Mammary epithelial cell (primary cell): ENCODE measurements at regions of chr1 and their contacts with region 1.

Region 1: GRCh38 chr1:160997323-160998038 is 23.5 kb downstream of the F11R start:
- DNase-seq: peak; percentile 64
- H3K4me3 ChIP-seq: no peak overlapping the region
- H3K27ac ChIP-seq: peak overlapping the region; percentile 9
- H3K4me1 ChIP-seq: peaks cover 32% of the 10 kb centered on the region
- H3K27me3 ChIP-seq: no peaks in the 10 kb centered on the region
- CTCF ChIP-seq: peak; percentile 59 to 71

Region 2: GRCh38 chr1:160681067-160681890 is 316.2 kb before region 1 on chr1:
- CTCF ChIA-PET with region 1: no interaction called
- dilution Hi-C with region 1: no loop called
- in situ Hi-C with region 1: no loop called
- intact Hi-C with region 1: loop called (anchors 2 kb)
- DNase-seq: peak; percentile 61
- H3K4me3 ChIP-seq: no peak overlapping the region
- H3K27ac ChIP-seq: no peak overlapping the region
- H3K4me1 ChIP-seq: no peaks in the 10 kb centered on the region
- H3K27me3 ChIP-seq: no peaks in the 10 kb centered on the region
- CTCF ChIP-seq: peak; percentile 79 to 91

Region 3: GRCh38 chr1:160911441-160911840 is 86.0 kb before region 1 on chr1:
- CTCF ChIA-PET with region 1: no interaction called
- dilution Hi-C with region 1: no loop called
- in situ Hi-C with region 1: no loop called
- intact Hi-C with region 1: no loop called
- DNase-seq: no peak
- H3K4me3 ChIP-seq: no peak overlapping the region
- H3K27ac ChIP-seq: no peak overlapping the region
- H3K4me1 ChIP-seq: no peaks in the 10 kb centered on the region
- H3K27me3 ChIP-seq: no peaks in the 10 kb centered on the region
- CTCF ChIP-seq: no peak

Region 4: DNA sequence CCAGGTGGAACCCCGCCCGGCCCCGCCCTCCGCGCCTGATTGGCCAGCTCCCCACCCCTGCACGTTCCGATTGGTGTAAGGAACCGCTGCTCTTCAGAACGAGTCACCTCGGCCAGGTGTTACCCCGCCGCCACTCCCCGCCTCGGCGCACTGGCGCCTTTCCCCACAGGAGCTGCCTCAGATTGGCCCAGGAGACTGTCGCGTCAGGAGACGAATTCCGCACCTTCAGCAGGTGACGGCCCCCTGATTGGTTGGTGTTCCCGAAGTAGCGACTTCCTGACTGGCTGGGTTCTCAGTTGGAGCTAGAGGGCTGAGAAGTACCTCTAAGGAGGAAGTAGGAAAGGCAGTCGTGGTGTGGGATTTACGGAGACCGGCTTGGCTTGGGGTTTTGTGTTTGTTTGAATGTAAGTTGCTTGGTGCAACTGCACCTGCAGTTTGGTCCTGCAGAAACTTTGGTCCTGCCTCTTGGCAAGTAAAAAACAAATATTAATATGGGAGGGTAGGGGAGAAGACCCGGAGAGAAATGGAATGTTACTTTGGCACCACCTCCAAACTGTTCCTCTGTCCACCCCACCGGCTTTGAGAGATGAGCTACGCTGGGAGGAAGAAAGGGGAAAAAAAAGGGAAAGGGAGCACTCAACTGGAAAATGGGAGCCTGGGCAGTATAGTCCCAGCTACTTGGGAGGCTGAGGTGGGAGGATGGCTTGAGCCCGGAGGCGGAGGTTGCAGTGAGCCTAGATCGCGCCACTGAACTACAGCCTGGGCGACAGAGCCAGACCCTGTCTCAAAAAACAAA is 23.9 kb after region 1 on chr1:
- CTCF ChIA-PET with region 1: interaction called, 10 read pairs
- dilution Hi-C with region 1: no loop called
- in situ Hi-C with region 1: no loop called
- intact Hi-C with region 1: loop called (anchors 1 kb)
- DNase-seq: peak; percentile 100
- H3K4me3 ChIP-seq: peak overlapping the region; percentile 74 to 81 (median 80)
- H3K27ac ChIP-seq: peak overlapping the region; percentile 98
- H3K4me1 ChIP-seq: peaks cover 34% of the 10 kb centered on the region
- H3K27me3 ChIP-seq: no peaks in the 10 kb centered on the region
- CTCF ChIP-seq: no peak

Region 5: GRCh38 chr1:161045750-161046571 is 48.5 kb after region 1 on chr1 and contains the start of gene USF1:
- CTCF ChIA-PET with region 1: no interaction called
- dilution Hi-C with region 1: loop called (anchors 5 kb)
- in situ Hi-C with region 1: no loop called
- intact Hi-C with region 1: loop called (anchors 2 kb)
- DNase-seq: peak; percentile 94
- H3K4me3 ChIP-seq: peak within 1 kb of the TSS; percentile 69 to 76 (median 70)
- H3K27ac ChIP-seq: peak within 1 kb of the TSS; percentile 81
- H3K4me1 ChIP-seq: peaks cover 8% of the 10 kb centered on the region
- H3K27me3 ChIP-seq: no peaks in the 10 kb centered on the region
- CTCF ChIP-seq: no peak
- total RNA-seq, gene USF1: 31.8 to 40.7 TPM

Region 6: DNA sequence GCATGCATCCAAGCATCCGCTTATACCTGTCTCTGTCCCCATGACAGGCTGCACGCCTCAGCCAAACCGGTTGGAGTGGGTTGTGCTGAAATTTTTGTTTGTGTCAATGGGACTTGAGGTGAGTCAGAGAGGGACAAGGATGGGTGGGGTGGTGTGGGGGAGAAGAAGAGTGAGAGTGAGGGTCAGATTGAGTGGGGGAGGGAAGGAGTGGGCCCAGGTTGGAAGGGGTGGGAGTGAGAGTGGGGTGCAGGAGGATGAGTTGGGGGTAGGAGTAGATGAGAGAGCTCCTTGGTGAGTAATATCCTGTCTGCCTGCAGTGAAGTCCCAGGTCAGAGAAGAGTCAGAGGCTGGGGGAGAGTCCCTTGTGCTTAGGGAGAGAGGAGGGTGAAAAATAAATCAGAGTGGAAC is 95.1 kb after region 1 on chr1:
- CTCF ChIA-PET with region 1: interaction called, 8 read pairs
- dilution Hi-C with region 1: loop called (anchors 5 kb)
- in situ Hi-C with region 1: no loop called
- intact Hi-C with region 1: loop called (anchors 1 kb)
- DNase-seq: peak; percentile 83
- H3K4me3 ChIP-seq: no peak overlapping the region
- H3K27ac ChIP-seq: peak overlapping the region; percentile 16
- H3K4me1 ChIP-seq: peaks cover 48% of the 10 kb centered on the region
- H3K27me3 ChIP-seq: no peaks in the 10 kb centered on the region
- CTCF ChIP-seq: no peak

Region 7: GRCh38 chr1:161132410-161133219 is 135.1 kb after region 1 on chr1 and contains the start of gene DEDD:
- CTCF ChIA-PET with region 1: no interaction called
- dilution Hi-C with region 1: no loop called
- in situ Hi-C with region 1: no loop called
- intact Hi-C with region 1: loop called (anchors 2 kb)
- DNase-seq: peak; percentile 97
- H3K4me3 ChIP-seq: peak within 1 kb of the TSS; percentile 57 to 88 (median 65)
- H3K27ac ChIP-seq: peak within 1 kb of the TSS; percentile 91
- H3K4me1 ChIP-seq: peaks cover 10% of the 10 kb centered on the region
- H3K27me3 ChIP-seq: no peaks in the 10 kb centered on the region
- CTCF ChIP-seq: peak in 1 of 2 donors; percentile 17
- total RNA-seq, gene DEDD: 40.0 to 42.3 TPM